Gastrocnemius medialis (tissue), 4 donors: ENCODE measurements at regions of chr22 and their contacts with region 1.

Region 1: DNA sequence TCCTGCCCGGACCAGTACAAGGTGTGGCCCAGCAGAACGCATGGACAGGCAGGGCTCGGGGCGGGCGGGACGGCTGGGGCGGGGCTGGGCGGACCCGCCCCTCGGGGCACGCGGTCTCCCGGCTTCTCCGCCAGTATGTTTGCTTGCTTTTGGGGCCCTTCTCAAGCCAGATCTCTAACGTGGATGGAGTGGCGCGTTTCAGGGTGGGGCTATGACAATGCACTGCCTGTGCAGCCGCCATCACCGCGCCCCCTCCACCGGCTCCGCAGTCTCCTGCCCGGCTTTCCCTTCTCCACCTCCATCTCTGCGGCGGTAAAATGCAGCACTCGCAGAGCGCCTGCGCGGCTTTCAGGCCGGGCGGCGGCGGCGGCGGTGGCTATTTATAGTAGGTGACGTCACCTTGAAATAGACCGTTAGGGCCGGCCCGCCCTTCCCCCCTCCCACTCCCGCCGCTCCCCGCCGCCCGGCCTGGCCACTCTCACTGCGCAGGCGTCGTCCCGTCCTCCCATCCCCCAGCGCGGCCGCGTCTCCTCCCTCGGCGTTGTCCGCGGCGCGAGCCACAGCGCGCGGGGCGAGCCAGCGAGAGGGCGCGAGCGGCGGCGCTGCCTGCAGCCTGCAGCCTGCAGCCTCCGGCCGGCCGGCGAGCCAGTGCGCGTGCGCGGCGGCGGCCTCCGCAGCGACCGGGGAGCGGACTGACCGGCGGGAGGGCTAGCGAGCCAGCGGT is at the start of gene YWHAH:
- DNase-seq: peak; percentile 94 to 95
- ATAC-seq: peak; percentile 90 to 91
- H3K4me3 ChIP-seq: peak within 1 kb of the TSS; percentile 63 to 94 (median 80)
- H3K27ac ChIP-seq: peak within 1 kb of the TSS; percentile 86 to 97 (median 94)
- H3K4me1 ChIP-seq: peaks cover 9 to 19% of the 10 kb centered on the region in 2 donors
- H3K27me3 ChIP-seq: no peaks in the 10 kb centered on the region
- CTCF ChIP-seq: peak in 1 of 5 experiments; percentile 19
- POLR2A ChIP-seq: peak; percentile 95 to 96
- total RNA-seq, gene YWHAH: 26.6 to 65.8 (median 45.7) TPM

Region 2: GRCh38 chr22:31661851-31662656 is 282.1 kb before region 1 on chr22 and contains the start of gene PISD:
- in situ Hi-C with region 1: loop called in 1 of 4 experiments (anchors 25 kb)
- intact Hi-C with region 1: loop called (anchors 10 kb)
- DNase-seq: peak; percentile 87 to 94
- ATAC-seq: peak; percentile 98
- H3K4me3 ChIP-seq: peak within 1 kb of the TSS; percentile 88 to 96 (median 94)
- H3K27ac ChIP-seq: peak within 1 kb of the TSS; percentile 64 to 85 (median 78)
- H3K4me1 ChIP-seq: peaks cover 16 to 19% of the 10 kb centered on the region in 2 donors
- H3K27me3 ChIP-seq: no peaks in the 10 kb centered on the region
- CTCF ChIP-seq: no peak
- POLR2A ChIP-seq: peak; percentile 69 to 73
- total RNA-seq, gene PISD: 15.3 to 19.0 (median 18.5) TPM

Region 3: DNA sequence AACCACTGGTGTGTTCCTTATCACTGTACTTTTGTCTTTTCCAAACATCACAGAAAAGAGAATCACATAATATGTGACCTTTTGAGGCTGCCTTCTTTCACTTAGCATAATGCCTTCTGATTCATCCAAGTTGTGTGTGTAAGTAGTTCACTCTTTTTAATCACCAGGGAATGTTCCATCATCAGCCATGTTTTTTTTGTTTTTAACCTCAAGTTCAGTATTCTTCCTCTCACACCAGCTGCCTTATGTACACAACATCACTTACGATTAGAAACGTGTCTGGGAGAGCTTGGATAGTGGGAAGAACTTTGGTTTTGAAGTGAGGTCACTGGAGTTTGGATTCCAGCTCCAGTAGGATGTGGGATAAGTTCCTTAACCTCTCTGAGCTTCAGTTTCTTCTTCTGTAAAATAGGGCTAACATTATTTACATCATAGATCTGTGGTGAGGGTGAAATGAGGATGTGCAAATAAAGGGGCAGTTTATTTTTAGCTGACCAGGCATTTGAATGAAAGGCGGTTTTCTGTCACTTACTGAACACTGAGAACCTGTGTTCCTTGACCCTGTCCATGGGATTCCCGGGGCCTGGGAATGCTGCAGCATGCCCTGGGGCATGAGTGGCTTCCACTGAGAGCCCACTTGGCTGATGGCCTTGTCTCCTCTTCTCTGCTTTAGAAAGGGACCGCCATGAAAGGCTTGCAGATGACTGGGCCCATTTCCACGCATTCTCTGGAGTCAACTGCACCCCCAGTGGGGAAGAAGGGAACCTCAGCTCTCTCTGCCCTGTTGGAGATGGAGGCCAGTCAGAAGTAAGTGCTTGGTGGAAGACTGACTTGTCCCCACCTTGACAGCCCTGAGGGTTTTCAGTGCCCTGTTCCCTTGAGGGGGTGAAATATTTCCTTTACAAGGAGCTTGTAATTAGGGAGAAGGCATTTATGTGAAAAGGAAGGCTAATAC is 97.7 kb before region 1 on chr22:
- in situ Hi-C with region 1: no loop called
- intact Hi-C with region 1: no loop called
- DNase-seq: no peak
- ATAC-seq: no peak
- H3K4me3 ChIP-seq: no peak overlapping the region
- H3K27ac ChIP-seq: no peak overlapping the region
- H3K4me1 ChIP-seq: peaks cover 8 to 9% of the 10 kb centered on the region in 2 donors
- H3K27me3 ChIP-seq: no peaks in the 10 kb centered on the region
- CTCF ChIP-seq: no peak
- POLR2A ChIP-seq: no peak

Region 4: DNA sequence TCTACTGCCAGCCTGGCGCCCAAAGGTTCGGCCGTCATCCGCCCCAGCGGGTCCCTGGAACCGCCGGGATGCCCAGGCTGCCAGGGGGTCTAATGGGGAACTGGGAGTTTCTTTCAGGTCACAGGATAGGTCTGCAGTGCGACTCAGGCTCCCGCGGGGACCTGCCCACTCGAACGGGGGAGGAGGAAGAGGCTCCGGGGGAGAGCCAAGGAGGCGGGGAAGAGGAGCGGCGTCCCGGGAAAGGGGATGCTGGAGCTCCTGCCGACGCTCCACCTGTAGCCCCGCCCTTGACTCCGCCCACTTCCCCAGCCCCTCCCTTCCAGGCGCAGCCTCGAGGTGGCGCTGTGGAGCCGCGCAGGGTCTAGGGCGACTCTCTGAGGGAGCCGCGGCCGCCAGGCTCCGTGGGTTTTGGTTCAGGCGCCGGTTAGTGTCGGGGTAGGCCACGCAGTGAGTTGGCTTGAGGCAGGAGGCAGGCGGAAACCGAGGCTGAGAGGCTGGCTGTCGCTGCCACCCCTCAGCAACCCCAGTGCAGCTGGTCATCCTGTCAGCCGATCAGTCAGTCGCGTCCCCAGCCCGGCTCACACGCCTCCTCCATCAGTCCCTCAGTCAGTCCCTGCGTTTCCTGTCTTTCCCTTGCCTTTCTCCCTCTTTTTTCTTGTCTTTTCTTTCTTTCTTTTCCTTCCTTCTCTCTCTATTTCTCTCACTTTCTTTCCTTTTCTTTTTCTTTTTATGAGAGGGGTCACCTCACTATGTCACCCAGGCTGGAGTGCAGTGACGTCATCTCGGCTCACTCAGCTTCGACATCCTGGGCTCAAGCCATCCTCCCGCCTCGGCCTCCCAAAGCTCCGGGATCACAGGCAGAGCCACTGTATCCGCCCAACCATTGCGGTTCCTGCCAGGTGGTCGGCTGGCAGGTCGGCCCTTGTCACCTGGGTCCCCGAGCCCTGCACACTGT is 26.6 kb after region 1 on chr22:
- in situ Hi-C with region 1: no loop called
- intact Hi-C with region 1: loop called (anchors 2 kb)
- DNase-seq: peak; percentile 39 to 65
- ATAC-seq: peak; percentile 94
- H3K4me3 ChIP-seq: peak overlapping the region; percentile 41 to 52 (median 46)
- H3K27ac ChIP-seq: no peak overlapping the region
- H3K4me1 ChIP-seq: peaks cover 0 to 11% of the 10 kb centered on the region in 2 donors
- H3K27me3 ChIP-seq: no peaks in the 10 kb centered on the region
- CTCF ChIP-seq: peak; percentile 82 to 96 (median 88)
- POLR2A ChIP-seq: no peak

Region 5: GRCh38 chr22:32123657-32124056 is 179.5 kb after region 1 on chr22:
- in situ Hi-C with region 1: no loop called
- intact Hi-C with region 1: no loop called
- DNase-seq: no peak
- ATAC-seq: no peak
- H3K4me3 ChIP-seq: no peak overlapping the region
- H3K27ac ChIP-seq: no peak overlapping the region
- H3K4me1 ChIP-seq: no peaks in the 10 kb centered on the region
- H3K27me3 ChIP-seq: no peaks in the 10 kb centered on the region
- CTCF ChIP-seq: no peak
- POLR2A ChIP-seq: no peak